ENCODE measurements at regions of chr11 and their contacts with region 1.

Region 1: DNA sequence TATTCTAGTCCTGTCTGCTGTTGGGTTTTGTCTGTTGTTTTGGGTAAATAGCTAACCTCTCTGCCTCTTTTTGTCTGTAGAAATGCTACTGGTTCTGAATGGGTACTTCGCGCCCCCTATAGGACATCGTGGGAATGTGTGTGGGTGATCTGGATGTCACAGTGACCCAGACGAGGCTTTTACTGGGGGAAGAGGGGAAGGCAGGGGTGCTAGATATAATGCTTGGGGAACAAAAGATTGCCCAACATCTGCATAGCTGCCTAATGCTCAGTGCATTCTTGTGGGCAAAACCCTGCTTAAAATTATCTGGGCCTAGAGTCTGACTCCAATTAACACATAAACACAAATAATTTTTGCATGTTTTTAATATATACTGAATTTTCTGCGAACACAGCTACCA is 57.7 kb downstream of the BMAL1 start:
- DNase-seq: peak in 2 of 3 donors; percentile 49 to 68
- ATAC-seq: peak; percentile 20 to 48 (median 36)
- H3K4me3 ChIP-seq: no peak overlapping the region
- H3K27ac ChIP-seq: no peak overlapping the region
- H3K4me1 ChIP-seq: peaks cover 0 to 95% (median 40%) of the 10 kb centered on the region in 4 donors
- H3K27me3 ChIP-seq: no peaks in the 10 kb centered on the region
- CTCF ChIP-seq: peak; percentile 74 to 77 (median 76)
- POLR2A ChIP-seq: no peak

Region 2: DNA sequence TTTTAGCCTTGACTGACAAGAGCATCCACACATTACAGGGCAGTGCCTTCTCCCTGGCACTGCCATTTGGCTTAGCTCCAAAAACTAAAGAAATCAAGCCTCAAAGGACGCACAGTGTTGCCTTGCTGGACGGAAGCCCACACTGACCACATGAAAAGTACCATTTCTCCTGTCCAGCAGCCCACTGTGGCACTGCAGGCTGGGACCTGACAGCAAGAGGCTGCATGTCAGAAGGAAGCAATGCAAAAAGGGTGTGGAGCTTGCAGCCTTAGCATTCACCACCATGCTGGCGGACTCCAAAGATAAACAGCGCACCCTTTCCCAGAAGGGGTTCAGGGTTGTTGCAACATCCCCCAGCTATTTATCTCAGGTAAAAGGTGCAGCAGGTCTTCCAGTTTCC is 167.0 kb before region 1 on chr11:
- intact Hi-C with region 1: no loop called
- DNase-seq: no peak
- ATAC-seq: no peak
- H3K4me3 ChIP-seq: no peak overlapping the region
- H3K27ac ChIP-seq: no peak overlapping the region
- H3K4me1 ChIP-seq: no peaks in the 10 kb centered on the region
- H3K27me3 ChIP-seq: no peaks in the 10 kb centered on the region
- CTCF ChIP-seq: no peak
- POLR2A ChIP-seq: no peak

Region 3: DNA sequence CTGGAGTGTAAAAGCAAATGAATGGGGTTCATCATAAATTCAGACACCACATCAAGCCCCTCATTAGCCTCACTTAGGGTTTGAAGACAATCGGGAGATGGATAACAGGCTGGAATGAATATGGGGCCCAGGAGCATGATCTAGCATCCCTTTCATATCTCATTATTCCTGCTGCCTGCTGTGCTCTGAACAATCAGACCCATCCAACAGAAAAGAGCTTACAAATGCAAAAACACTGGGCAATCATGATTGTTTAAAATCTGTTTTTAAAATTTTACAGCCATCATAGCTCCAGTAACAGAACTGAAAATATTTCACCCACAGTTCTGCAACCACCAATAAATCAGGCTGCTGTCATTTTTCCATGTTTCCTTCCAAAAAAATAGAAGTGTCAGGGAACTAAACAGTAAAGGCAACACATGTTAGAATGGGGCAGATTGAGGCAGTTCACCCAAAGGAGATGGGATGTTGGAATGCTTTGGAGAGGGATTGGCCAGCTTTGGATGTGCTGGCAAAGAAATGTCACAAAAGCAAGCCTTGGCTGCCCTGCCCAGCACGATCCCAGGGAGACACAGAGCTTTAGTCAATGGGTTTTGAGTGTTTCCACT is 105.5 kb before region 1 on chr11:
- intact Hi-C with region 1: no loop called
- DNase-seq: no peak
- ATAC-seq: no peak
- H3K4me3 ChIP-seq: no peak overlapping the region
- H3K27ac ChIP-seq: no peak overlapping the region
- H3K4me1 ChIP-seq: no peaks in the 10 kb centered on the region
- H3K27me3 ChIP-seq: no peaks in the 10 kb centered on the region
- CTCF ChIP-seq: no peak
- POLR2A ChIP-seq: no peak

Region 4: DNA sequence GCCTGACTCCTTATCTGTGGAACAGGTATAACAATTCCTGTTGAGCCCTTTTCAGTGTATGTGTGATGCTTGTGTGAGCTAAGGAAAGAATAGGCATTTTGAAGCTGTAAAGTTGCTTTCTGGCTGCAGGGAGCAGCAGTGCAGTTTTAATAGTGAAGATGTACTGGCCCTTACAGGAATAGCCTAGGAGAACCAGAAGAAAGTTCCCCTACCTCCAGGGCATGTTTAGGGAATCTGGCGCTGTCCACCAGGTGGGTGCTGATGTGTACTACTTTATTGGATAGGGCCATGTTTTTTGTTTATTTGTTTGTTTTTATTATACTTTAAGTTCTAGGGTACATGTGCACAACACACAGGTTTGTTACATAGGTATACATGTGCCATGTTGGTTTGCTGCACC is 46.2 kb before region 1 on chr11:
- intact Hi-C with region 1: loop called in 1 of 2 experiments (anchors 10 kb)
- DNase-seq: no peak
- ATAC-seq: no peak
- H3K4me3 ChIP-seq: no peak overlapping the region
- H3K27ac ChIP-seq: no peak overlapping the region
- H3K4me1 ChIP-seq: peaks cover 0 to 5% (median 0%) of the 10 kb centered on the region in 4 donors
- H3K27me3 ChIP-seq: no peaks in the 10 kb centered on the region
- CTCF ChIP-seq: no peak
- POLR2A ChIP-seq: no peak

Region 5: GRCh38 chr11:13644997-13645687 is 309.8 kb after region 1 on chr11:
- intact Hi-C with region 1: no loop called
- DNase-seq: no peak
- ATAC-seq: no peak
- H3K4me3 ChIP-seq: no peak overlapping the region
- H3K27ac ChIP-seq: no peak overlapping the region
- H3K4me1 ChIP-seq: no peaks in the 10 kb centered on the region
- H3K27me3 ChIP-seq: no peaks in the 10 kb centered on the region
- CTCF ChIP-seq: no peak
- POLR2A ChIP-seq: no peak